Esophagus muscularis mucosa (tissue), 4 donors: ENCODE measurements at regions of chr4 and their contacts with region 1.

Region 1: GRCh38 chr4:184538023-184538599 is 63.8 kb upstream of the IRF2 start:
- DNase-seq: peak; percentile 97
- H3K4me3 ChIP-seq: peak overlapping the region; percentile 62 to 80 (median 68)
- H3K27ac ChIP-seq: peak overlapping the region; percentile 91 to 96 (median 94)
- H3K4me1 ChIP-seq: peaks cover 31 to 38% (median 38%) of the 10 kb centered on the region in 4 donors
- H3K27me3 ChIP-seq: no peaks in the 10 kb centered on the region
- CTCF ChIP-seq: peak; percentile 70 to 86 (median 73)
- EP300 ChIP-seq: no peak
- POLR2A ChIP-seq: no peak

Region 2: GRCh38 chr4:184263910-184264732 is 274.0 kb before region 1 on chr4:
- intact Hi-C with region 1: loop called (anchors 2 kb)
- DNase-seq: peak; percentile 98
- H3K4me3 ChIP-seq: peak overlapping the region in 1 of 4 donors; percentile 14
- H3K27ac ChIP-seq: no peak overlapping the region
- H3K4me1 ChIP-seq: peaks cover 0 to 7% (median 4%) of the 10 kb centered on the region in 4 donors
- H3K27me3 ChIP-seq: no peaks in the 10 kb centered on the region
- CTCF ChIP-seq: peak; percentile 85 to 91 (median 91)
- EP300 ChIP-seq: no peak
- POLR2A ChIP-seq: no peak

Region 3: GRCh38 chr4:184287697-184288255 is 250.3 kb before region 1 on chr4:
- intact Hi-C with region 1: loop called (anchors 5 kb)
- DNase-seq: peak; percentile 77
- H3K4me3 ChIP-seq: no peak overlapping the region
- H3K27ac ChIP-seq: no peak overlapping the region
- H3K4me1 ChIP-seq: peaks cover 0 to 10% (median 10%) of the 10 kb centered on the region in 4 donors
- H3K27me3 ChIP-seq: no peaks in the 10 kb centered on the region
- CTCF ChIP-seq: peak; percentile 25 to 44 (median 37)
- EP300 ChIP-seq: no peak
- POLR2A ChIP-seq: no peak

Region 4: DNA sequence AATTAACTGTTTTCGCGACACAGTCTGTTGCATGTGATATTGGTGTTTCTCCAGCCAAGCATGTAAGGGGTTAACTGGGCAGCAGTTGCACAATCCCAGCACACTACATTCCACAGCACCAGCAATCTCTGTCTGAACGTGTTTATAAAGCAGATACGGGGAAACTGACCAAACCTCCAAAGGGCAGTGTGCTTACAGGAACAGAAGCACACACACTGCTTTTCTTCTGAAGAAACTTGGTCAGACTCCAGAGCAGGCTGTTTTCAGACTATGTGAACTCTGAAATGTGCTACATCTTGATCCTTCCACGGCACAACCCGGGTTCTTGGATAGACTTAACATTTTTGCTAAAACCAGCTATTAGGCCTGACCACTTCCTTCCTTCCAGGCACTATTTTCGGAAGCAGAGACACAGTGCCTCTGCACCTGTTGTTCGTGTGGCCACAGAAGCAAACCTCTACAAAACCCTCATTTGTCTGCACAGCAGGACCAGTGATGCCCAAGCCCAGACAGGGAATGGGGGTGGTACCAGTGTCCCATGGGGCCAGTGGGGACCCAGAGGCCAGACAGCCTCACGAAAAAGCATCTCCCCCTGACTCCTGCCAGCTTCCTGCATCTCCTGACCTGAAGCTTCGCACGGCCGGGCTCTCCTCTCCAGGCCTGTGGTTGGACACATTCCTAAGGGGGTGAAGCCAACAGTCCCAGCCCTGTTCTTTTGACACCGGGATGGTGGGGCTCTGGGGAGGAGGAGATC is 153.9 kb before region 1 on chr4:
- intact Hi-C with region 1: loop called (anchors 5 kb)
- DNase-seq: no peak
- H3K4me3 ChIP-seq: peak overlapping the region; percentile 30 to 51 (median 39)
- H3K27ac ChIP-seq: peak overlapping the region; percentile 69 to 82 (median 78)
- H3K4me1 ChIP-seq: peaks cover 40 to 63% (median 53%) of the 10 kb centered on the region in 4 donors
- H3K27me3 ChIP-seq: no peaks in the 10 kb centered on the region
- CTCF ChIP-seq: no peak
- EP300 ChIP-seq: no peak
- POLR2A ChIP-seq: no peak

Region 5: DNA sequence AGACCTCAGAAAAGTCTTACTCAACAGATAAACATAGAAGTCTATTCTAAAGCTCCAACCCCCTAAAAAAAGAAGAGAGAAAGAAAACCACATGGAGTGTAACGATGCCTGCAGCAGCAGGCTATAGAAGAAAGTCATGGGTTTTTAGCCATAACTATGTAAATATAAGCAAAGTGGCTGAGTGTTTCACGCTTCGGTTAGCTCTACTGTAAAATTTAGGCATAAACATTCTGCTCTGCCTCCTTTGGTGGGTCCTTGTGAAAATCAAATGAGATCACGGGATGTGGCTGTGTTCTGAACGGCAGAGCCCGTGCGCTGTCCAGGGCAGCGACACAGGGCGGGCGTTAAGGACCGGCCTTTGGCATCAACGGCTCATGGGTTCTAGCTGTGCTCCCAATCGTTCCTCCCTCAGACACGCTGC is 142.1 kb before region 1 on chr4:
- intact Hi-C with region 1: loop called (anchors 5 kb)
- DNase-seq: no peak
- H3K4me3 ChIP-seq: no peak overlapping the region
- H3K27ac ChIP-seq: peak overlapping the region; percentile 16 to 65 (median 56)
- H3K4me1 ChIP-seq: peaks cover 23 to 38% (median 32%) of the 10 kb centered on the region in 4 donors
- H3K27me3 ChIP-seq: no peaks in the 10 kb centered on the region
- CTCF ChIP-seq: no peak
- EP300 ChIP-seq: no peak
- POLR2A ChIP-seq: no peak

Region 6: DNA sequence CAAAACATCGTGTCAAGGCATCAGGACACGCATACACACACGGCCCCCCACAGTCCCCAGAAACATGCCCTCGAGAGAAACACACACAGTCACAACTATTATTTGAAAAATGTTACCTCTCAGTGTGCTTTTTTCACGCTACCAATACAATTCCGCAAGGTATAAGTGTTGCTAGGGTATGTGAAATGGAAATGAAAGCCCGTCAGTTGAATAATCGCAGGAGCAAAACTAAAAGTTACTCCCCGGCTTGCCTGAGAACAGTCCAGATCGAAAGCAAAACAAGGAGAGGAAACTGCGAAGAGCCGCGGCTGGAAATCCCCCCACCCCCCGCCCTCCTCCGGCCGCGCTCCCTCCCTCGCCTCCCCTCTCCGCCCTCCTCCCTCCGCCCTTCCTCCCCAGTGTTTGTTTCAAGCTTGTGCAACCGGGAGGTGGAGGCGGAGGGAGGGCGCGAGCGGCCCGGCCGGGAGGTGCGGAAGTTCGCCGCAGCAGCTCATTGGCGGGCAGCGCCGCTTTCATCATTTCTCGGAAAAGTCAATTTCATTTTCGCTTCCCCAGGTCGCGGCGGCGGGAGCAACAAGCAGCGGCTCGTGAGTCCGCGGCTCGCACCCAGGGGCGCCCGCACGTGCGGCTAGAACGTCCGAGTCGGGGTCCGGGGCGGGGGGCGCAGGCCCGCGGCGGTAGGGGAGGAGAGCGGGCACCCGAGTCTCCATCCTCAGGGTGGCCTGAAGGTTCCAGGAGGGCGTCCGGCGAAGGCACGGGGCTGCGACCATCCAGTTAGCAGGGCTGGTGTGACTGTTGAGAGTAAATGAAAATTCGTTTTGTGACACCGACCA is 63.6 kb before region 1 on chr4 and contains the start of gene IRF2:
- intact Hi-C with region 1: loop called (anchors 1 kb)
- DNase-seq: peak; percentile 99
- H3K4me3 ChIP-seq: peak within 1 kb of the TSS; percentile 68 to 93 (median 84)
- H3K27ac ChIP-seq: peak within 1 kb of the TSS; percentile 92 to 98 (median 95)
- H3K4me1 ChIP-seq: peaks cover 44 to 64% (median 55%) of the 10 kb centered on the region in 4 donors
- H3K27me3 ChIP-seq: no peaks in the 10 kb centered on the region
- CTCF ChIP-seq: peak in 2 of 3 experiments; percentile 16 to 30
- EP300 ChIP-seq: peak; percentile 70
- POLR2A ChIP-seq: peak; percentile 96
- total RNA-seq, gene IRF2: 32.3 to 50.1 (median 36.4) TPM

Region 7: GRCh38 chr4:184649026-184649970 is 111.2 kb after region 1 on chr4 and contains the starts of genes CASP3 and PRIMPOL:
- intact Hi-C with region 1: loop called (anchors 5 kb)
- DNase-seq: peak; percentile 99
- H3K4me3 ChIP-seq: peak within 1 kb of the TSS; percentile 79 to 99 (median 88)
- H3K27ac ChIP-seq: peak within 1 kb of the TSS; percentile 96 to 100 (median 98)
- H3K4me1 ChIP-seq: peaks cover 42 to 52% (median 50%) of the 10 kb centered on the region in 4 donors
- H3K27me3 ChIP-seq: no peaks in the 10 kb centered on the region
- CTCF ChIP-seq: peak; percentile 14 to 42 (median 21)
- EP300 ChIP-seq: no peak
- POLR2A ChIP-seq: peak; percentile 72
- total RNA-seq, gene CASP3: 11.3 to 18.6 (median 15.9) TPM
- total RNA-seq, gene PRIMPOL: 13.4 to 22.8 (median 16.6) TPM